ENCODE measurements at regions of chr5 and their contacts with region 1.

Region 1: GRCh38 chr5:172106511-172107356 is 81.3 kb downstream of the STK10 start:
- DNase-seq: peak in 4 of 6 donors; percentile 47 to 88 (median 72)
- ATAC-seq: peak; percentile 58 to 80 (median 72)
- H3K4me3 ChIP-seq: peak overlapping the region in 2 of 4 donors; percentile 31 to 40
- H3K27ac ChIP-seq: no peak overlapping the region
- H3K4me1 ChIP-seq: peaks cover 0 to 14% (median 0%) of the 10 kb centered on the region in 3 donors
- H3K27me3 ChIP-seq: no peaks in the 10 kb centered on the region
- CTCF ChIP-seq: peak; percentile 79 to 91 (median 84)

Region 2: DNA sequence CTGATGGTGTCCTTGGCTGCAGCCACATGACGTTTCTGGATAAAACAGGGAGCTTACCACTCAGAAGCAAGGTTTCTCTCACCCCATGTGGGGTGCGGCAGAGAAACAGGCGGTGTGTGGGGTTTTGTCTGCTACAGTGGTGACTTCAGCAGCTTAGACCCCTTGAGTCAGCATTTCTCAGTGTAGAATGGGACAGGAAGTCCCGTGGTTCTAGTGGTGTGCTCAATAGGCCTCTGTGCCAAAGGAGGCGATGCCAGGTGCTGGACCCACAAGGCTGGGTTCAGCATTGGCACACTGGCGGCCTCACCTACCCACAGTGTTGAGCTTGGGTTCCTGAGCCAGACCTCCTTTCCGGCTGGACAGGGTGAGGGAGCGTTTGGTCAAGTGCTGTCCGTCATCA is 446.3 kb before region 1 on chr5:
- intact Hi-C with region 1: no loop called
- DNase-seq: no peak
- ATAC-seq: no peak
- H3K4me3 ChIP-seq: no peak overlapping the region
- H3K27ac ChIP-seq: no peak overlapping the region
- H3K4me1 ChIP-seq: no peaks in the 10 kb centered on the region
- H3K27me3 ChIP-seq: no peaks in the 10 kb centered on the region
- CTCF ChIP-seq: no peak

Region 3: DNA sequence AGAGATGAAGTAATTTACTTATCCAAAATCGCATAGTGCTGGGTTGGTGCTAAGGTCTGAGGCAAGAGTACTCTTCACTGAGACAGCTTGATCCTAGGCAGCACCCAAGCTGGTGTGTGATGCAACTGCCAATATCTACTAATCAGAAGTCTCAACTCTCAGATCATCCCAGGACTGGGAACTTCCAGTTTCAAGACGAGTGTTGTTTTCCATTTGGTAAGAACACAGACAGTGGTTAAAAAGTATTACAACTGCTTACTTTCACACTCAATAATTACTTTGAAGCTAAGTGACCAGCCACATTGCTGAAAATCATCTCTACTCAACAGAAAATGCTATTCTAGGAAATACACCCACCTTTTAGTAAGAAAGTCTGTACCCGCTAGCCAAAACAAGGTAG is 145.6 kb before region 1 on chr5:
- intact Hi-C with region 1: no loop called
- DNase-seq: no peak
- ATAC-seq: peak in 1 of 4 donors; percentile 8
- H3K4me3 ChIP-seq: no peak overlapping the region
- H3K27ac ChIP-seq: no peak overlapping the region
- H3K4me1 ChIP-seq: peaks cover 27 to 60% (median 43%) of the 10 kb centered on the region in 3 donors
- H3K27me3 ChIP-seq: no peaks in the 10 kb centered on the region
- CTCF ChIP-seq: no peak

Region 4: DNA sequence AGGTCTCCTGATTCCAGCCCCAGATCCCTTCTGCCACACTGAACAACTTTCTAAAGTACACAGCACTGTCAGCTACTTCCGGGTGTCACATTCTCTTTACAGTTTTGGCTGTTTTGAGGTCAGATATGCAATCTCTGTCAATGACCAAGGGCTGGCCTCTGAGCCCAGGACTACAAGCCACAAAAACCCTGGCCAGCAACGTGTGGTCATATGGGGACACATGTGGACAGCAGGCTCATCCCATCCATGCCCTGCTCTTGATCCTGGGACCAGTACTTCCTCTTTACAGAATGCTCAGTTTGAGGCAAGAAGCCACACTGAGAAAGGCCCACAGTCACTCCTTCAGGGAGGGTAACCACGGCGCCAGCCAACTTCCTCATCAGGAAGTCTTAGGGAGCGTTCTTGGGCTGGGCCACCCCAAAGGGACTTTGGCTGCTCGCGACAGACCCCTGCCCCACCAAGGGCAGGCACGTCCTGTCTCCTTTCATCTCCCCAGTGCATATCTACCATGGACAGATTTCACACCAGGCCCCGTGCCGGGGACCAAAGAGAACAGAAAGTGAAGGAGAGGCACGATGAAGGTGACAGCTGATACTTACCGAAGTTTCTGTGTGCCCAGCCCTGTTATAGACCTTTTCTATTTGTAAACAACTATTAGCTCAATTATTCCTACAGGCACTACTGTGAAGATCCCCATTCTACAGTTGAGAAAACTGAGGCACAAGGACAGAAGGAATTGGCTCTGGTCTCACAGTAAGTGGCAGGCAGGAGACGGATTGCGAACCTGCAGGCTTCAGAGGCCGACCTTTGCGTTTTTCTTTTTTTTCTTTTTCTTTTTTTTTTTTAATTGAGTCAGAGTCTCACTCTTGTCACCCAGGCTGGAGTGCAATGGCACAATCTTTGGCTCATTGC is 44.0 kb after region 1 on chr5:
- intact Hi-C with region 1: no loop called
- DNase-seq: peak in 1 of 6 donors; percentile 58
- ATAC-seq: peak in 3 of 4 donors; percentile 47 to 82 (median 75)
- H3K4me3 ChIP-seq: no peak overlapping the region
- H3K27ac ChIP-seq: peak overlapping the region in 2 of 4 donors; percentile 27 to 33
- H3K4me1 ChIP-seq: no peaks in the 10 kb centered on the region
- H3K27me3 ChIP-seq: no peaks in the 10 kb centered on the region
- CTCF ChIP-seq: no peak

Region 5: GRCh38 chr5:172175263-172175719 is 68.6 kb after region 1 on chr5:
- intact Hi-C with region 1: no loop called
- DNase-seq: peak in 1 of 6 donors; percentile 57
- ATAC-seq: peak in 3 of 4 donors; percentile 31 to 65 (median 47)
- H3K4me3 ChIP-seq: peak overlapping the region in 1 of 4 donors; percentile 13
- H3K27ac ChIP-seq: no peak overlapping the region
- H3K4me1 ChIP-seq: no peaks in the 10 kb centered on the region
- H3K27me3 ChIP-seq: no peaks in the 10 kb centered on the region
- CTCF ChIP-seq: no peak

Region 6: DNA sequence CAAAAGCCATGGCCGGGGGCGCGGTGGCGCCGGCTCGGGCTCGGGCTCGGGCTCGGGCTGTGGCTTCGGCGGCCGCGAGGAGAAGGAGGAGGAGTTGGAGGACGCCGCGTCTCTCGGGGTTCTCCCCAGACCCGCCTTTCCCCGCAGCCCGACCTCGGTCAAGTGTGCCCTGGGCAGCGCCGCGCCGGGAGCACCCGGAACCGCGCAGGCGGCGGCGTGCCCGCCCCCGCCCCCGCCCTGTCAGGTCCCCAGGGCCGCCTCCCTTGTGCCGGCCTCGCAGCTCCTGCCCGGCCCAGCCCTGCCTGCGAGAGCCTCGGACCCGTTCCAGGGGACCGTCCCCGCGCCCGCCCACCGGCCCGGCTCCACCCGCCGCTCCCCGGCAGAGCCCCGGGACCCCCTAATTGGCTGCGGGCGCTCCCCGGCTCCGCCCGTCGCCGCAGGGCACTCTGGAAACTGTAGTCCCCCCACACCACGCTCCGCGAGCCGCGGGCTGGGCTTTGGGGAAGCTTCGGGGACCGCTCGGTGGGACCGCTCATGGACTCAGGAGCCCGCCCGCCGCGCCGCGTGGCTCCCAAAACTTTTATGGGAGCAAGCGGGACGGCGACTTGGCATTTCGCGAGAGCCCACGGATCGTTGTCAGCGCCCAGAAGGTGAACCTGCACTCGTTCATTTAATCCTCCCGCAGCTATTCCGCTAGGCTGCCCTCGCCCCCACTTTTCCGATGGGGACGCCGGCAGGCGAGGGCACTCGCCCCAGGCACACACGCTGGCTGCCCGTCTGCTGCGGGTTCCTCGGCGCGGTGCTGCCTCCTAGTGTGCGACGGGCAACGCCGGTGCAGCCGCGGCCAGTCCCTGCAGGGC is 81.5 kb after region 1 on chr5 and contains the start of gene STK10:
- intact Hi-C with region 1: loop called in 2 of 3 experiments (anchors 5 kb)
- DNase-seq: peak; percentile 91 to 95 (median 94)
- ATAC-seq: peak; percentile 89 to 96 (median 92)
- H3K4me3 ChIP-seq: peak within 1 kb of the TSS; percentile 55 to 89 (median 68)
- H3K27ac ChIP-seq: peak within 1 kb of the TSS; percentile 44 to 84 (median 74)
- H3K4me1 ChIP-seq: peaks cover 0 to 4% (median 0%) of the 10 kb centered on the region in 3 donors
- H3K27me3 ChIP-seq: no peaks in the 10 kb centered on the region
- CTCF ChIP-seq: peak; percentile 40 to 84 (median 71)
- total RNA-seq, gene STK10: 4.1 to 16.3 (median 6.3) TPM

Region 7: DNA sequence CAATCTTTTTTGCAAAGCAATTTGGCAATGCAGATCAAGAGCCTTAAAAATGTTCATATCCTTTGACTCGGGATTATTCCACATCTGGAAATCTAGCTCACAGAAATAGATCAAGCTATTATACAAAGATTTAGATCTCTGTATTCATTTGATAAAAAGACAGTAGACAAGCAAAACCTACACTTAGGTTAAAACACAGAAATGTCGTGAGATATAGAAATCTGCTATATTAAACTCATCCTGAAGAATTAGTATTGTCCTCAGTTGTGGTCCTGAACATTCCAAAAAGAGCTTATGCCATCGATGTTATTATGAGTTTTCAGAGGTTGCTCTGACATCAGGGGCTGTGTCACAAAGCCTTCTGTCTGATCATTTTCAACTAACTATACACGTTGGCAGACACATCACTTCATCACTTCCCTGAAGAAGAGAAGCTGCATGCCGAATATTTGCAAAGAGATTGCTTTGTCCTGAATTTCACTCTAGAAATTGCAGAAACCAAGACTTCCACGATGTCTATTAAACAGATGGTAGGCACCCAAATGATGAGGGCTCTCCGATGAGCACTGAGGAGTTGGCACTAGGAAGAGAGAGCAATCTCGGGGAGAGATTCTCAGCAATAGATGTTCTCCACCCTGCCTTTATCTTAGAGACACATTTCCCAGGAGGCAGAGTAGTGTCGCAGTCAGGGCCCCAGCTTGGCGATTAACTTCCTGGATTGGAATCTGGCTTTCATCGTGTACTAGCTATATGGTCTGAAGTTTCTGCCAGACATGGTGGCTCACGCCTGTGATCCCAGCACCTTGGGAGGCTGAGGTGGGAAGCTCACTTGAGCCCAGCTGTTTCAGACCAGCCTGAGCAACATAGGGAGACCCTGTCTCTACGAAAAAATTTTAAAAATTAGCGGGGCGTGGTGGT is 178.8 kb after region 1 on chr5:
- intact Hi-C with region 1: loop called in 2 of 3 experiments (anchors 5 to 10 kb)
- DNase-seq: no peak
- ATAC-seq: no peak
- H3K4me3 ChIP-seq: no peak overlapping the region
- H3K27ac ChIP-seq: no peak overlapping the region
- H3K4me1 ChIP-seq: peaks cover 8 to 19% (median 16%) of the 10 kb centered on the region in 3 donors
- H3K27me3 ChIP-seq: no peaks in the 10 kb centered on the region
- CTCF ChIP-seq: no peak

Region 8: DNA sequence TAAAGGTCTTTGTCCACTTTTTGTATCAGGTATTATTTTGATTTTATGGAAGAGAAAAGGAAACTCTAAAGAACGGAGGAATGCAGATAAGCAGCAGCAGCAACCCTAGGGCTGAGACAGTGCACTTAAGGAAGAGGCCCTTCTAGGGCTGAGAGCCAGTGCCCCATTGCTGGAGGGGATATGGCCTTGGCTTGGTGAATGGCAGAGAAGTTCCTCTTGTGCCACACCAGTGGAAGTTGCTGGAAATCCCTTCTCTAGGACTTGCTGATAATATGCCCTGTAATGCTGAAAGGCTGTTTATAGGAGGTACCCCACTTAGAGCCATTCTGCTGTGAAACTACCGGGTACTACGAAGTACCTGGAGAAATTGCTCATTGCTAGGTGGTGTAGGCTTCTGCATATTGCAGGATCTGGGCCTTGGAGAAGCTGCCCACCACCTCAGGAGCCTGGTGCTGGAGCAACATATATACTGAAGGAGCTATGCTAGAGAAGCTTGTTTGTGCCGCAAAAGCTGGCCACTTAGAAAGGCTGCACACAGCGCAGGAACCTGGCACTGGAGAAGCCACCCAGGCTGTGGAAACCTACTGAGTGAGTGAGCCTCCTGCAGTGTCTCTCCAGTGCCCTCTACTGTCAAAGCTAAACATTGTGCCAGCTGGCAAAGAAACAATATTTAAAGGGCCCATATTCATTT is 186.5 kb after region 1 on chr5:
- intact Hi-C with region 1: loop called in 2 of 3 experiments (anchors 5 to 10 kb)
- DNase-seq: peak; percentile 60 to 76 (median 70)
- ATAC-seq: peak; percentile 93 to 99 (median 99)
- H3K4me3 ChIP-seq: no peak overlapping the region
- H3K27ac ChIP-seq: no peak overlapping the region
- H3K4me1 ChIP-seq: peaks cover 4 to 8% (median 5%) of the 10 kb centered on the region in 3 donors
- H3K27me3 ChIP-seq: no peaks in the 10 kb centered on the region
- CTCF ChIP-seq: peak; percentile 51 to 76 (median 69)